ENCODE measurements at regions of chr10 and their contacts with region 1.

Region 1: DNA sequence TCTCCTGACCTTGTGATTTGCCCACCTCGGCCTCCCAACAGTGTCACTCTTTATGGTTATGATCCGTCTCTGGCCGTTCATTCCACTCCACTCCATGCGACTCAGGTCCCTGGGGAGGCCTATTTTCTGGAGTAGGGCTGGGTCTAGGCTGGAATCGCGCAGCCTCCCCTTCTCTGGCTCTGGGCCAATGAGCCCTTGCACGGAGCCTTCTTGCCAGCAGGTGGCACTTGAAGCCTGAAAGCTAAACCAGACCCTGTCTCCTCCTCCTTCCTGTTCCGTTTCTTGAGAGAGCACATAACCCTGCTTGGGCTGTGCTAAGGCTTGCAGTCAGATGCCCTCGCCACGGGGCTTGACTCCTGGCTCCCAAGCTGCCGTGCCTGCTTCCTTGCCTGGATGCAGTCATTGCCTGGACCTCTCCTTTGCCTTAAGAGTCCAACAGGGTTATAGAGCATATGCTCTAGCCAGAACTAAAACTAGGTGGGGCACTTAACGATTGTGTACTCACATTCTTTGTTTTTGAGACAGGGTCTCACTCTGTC is 9.6 kb upstream of the DNAJB12 start:
- DNase-seq: peak; percentile 82 to 92
- H3K4me3 ChIP-seq: no peak overlapping the region
- H3K27ac ChIP-seq: peak overlapping the region; percentile 71
- H3K4me1 ChIP-seq: peaks cover 15% of the 10 kb centered on the region
- H3K27me3 ChIP-seq: no peaks in the 10 kb centered on the region
- CTCF ChIP-seq: peak; percentile 97

Region 2: DNA sequence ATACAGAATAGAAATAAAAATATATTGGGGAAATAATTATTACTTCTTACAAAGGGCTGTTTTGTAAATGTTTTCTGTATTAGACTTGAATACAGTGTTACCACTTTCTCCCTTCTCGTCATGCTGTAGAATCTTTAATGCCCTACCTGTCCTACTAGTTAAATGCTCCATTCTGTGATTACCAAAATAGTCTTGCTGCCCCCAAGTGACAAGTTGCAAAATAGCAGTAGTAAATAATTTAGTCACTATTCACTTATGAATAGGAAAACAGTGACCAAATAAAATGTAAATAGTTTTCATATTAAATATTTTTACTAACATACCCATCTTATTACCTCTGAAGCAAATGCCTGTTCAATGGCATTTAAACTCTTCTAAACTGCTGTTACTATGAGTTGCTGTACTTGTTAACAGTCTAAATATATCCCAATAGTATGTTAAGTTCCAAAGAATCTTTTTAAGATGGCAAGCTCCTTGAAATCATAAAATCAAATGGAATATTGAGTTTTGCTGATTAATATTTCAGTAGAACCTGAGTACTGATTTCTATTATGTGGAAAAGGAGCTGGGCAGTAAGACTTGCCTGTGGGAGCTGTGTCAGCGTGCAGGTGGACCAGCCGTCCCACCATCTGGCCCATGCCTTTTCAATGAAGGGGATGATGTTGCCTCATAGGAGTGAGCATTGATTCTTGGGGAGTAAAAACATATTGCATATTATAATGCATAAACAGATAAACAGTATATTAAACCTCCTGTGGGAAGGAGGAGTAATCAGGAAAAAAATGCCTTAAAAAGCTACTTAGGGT is 511.1 kb after region 1 on chr10:
- CTCF ChIA-PET with region 1: no interaction called
- POLR2A ChIA-PET with region 1: interaction called, 6 read pairs
- intact Hi-C with region 1: loop called (anchors 2 kb)
- DNase-seq: peak; percentile 18 to 53
- H3K4me3 ChIP-seq: no peak overlapping the region
- H3K27ac ChIP-seq: no peak overlapping the region
- H3K4me1 ChIP-seq: no peaks in the 10 kb centered on the region
- H3K27me3 ChIP-seq: no peaks in the 10 kb centered on the region
- CTCF ChIP-seq: peak; percentile 79

Region 3: DNA sequence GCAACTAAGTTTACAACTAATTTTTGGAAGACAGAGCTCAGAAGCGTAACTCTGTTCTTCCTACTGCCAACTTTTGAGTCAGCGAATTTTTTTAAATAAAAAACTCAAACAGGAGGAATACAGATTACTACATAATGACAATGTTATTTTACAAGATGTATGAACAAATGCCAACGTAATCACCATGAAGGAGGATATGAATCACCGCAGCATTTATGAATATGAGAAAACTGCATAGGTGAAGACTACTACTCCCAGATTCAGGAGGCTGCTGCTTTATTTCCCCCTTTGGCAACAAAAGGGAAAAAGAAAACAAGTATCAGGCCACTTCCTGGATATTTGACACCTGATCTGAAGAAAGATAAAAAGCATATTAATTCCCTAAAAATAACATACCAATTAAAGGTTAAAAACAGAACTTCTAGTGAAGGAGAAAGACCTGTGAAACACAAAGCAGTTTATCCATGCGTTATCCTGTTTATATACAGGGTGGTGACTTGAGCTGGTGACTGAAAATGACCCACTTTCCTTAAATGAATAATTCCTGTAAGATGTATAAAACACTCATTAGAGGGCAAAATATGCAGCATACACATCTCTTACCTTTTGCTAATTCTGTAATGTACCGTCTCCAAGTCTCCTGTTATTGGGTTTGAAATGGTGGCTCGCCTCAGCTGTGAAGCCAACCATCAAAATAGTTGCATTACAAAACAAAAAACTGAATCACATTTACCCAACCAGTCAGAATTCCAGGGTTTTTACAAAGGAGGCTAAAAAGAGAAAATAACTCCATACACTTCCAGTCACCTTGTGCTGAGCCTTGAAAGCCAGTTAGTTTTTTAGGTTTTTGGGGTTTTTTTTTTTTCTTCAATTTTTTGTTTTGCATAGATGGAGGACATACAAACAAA is 680.3 kb after region 1 on chr10:
- CTCF ChIA-PET with region 1: no interaction called
- POLR2A ChIA-PET with region 1: no interaction called
- intact Hi-C with region 1: loop called (anchors 5 kb)
- DNase-seq: peak; percentile 19 to 95
- H3K4me3 ChIP-seq: peak overlapping the region; percentile 3; the same call in 1 of the 2 replicates
- H3K27ac ChIP-seq: peak overlapping the region; percentile 90
- H3K4me1 ChIP-seq: peaks cover 40% of the 10 kb centered on the region
- H3K27me3 ChIP-seq: no peaks in the 10 kb centered on the region
- CTCF ChIP-seq: no peak

Region 4: GRCh38 chr10:73060738-73061635 is 696.7 kb after region 1 on chr10:
- CTCF ChIA-PET with region 1: no interaction called
- POLR2A ChIA-PET with region 1: no interaction called
- intact Hi-C with region 1: loop called (anchors 1 kb)
- DNase-seq: no peak
- H3K4me3 ChIP-seq: no peak overlapping the region
- H3K27ac ChIP-seq: no peak overlapping the region
- H3K4me1 ChIP-seq: no peaks in the 10 kb centered on the region
- H3K27me3 ChIP-seq: no peaks in the 10 kb centered on the region
- CTCF ChIP-seq: peak; percentile 80

Region 5: GRCh38 chr10:73167783-73168464 is 803.6 kb after region 1 on chr10 and contains the starts of genes ECD and FAM149B1:
- CTCF ChIA-PET with region 1: no interaction called
- POLR2A ChIA-PET with region 1: no interaction called
- intact Hi-C with region 1: loop called (anchors 5 kb)
- DNase-seq: peak; percentile 92 to 96
- H3K4me3 ChIP-seq: peak within 1 kb of the TSS; percentile 83
- H3K27ac ChIP-seq: peak within 1 kb of the TSS; percentile 85
- H3K4me1 ChIP-seq: peaks cover 24% of the 10 kb centered on the region
- H3K27me3 ChIP-seq: no peaks in the 10 kb centered on the region
- CTCF ChIP-seq: peak; percentile 36; the same call in 1 of the 2 replicates
- total RNA-seq, gene ECD: 29.3 and 33.2 TPM in 2 replicates
- total RNA-seq, gene FAM149B1: 22.9 and 24.4 TPM in 2 replicates

Measured in PC-9 (cell line).